Aorta (tissue), 5 donors: ENCODE measurements at regions of chr22 and their contacts with region 1.

Region 1: GRCh38 chr22:20885557-20886323 is 26.9 kb downstream of the SNAP29 start:
- DNase-seq: peak; percentile 89 to 93
- ATAC-seq: peak; percentile 94
- H3K4me3 ChIP-seq: no peak overlapping the region
- H3K27ac ChIP-seq: peak overlapping the region in 1 of 2 donors; percentile 13
- H3K4me1 ChIP-seq: no peaks in the 10 kb centered on the region
- H3K27me3 ChIP-seq: no peaks in the 10 kb centered on the region

Region 2: GRCh38 chr22:20916983-20917810 is 31.5 kb after region 1 on chr22 and contains the start of gene CRKL:
- intact Hi-C with region 1: loop called in 1 of 2 experiments (anchors 1 kb)
- DNase-seq: peak; percentile 98 to 99
- ATAC-seq: peak; percentile 100
- H3K4me3 ChIP-seq: peak within 1 kb of the TSS; percentile 50 to 87
- H3K27ac ChIP-seq: peak within 1 kb of the TSS; percentile 14 to 61
- H3K4me1 ChIP-seq: peaks cover 0 to 3% of the 10 kb centered on the region in 2 donors
- H3K27me3 ChIP-seq: no peaks in the 10 kb centered on the region
- total RNA-seq, gene CRKL: 36.2 to 45.9 TPM

Region 3: GRCh38 chr22:20946080-20946986 is 60.6 kb after region 1 on chr22:
- intact Hi-C with region 1: no loop called
- DNase-seq: peak in 1 of 2 donors; percentile 34
- ATAC-seq: no peak
- H3K4me3 ChIP-seq: no peak overlapping the region
- H3K27ac ChIP-seq: no peak overlapping the region
- H3K4me1 ChIP-seq: peaks cover 0 to 3% of the 10 kb centered on the region in 2 donors
- H3K27me3 ChIP-seq: no peaks in the 10 kb centered on the region

Region 4: DNA sequence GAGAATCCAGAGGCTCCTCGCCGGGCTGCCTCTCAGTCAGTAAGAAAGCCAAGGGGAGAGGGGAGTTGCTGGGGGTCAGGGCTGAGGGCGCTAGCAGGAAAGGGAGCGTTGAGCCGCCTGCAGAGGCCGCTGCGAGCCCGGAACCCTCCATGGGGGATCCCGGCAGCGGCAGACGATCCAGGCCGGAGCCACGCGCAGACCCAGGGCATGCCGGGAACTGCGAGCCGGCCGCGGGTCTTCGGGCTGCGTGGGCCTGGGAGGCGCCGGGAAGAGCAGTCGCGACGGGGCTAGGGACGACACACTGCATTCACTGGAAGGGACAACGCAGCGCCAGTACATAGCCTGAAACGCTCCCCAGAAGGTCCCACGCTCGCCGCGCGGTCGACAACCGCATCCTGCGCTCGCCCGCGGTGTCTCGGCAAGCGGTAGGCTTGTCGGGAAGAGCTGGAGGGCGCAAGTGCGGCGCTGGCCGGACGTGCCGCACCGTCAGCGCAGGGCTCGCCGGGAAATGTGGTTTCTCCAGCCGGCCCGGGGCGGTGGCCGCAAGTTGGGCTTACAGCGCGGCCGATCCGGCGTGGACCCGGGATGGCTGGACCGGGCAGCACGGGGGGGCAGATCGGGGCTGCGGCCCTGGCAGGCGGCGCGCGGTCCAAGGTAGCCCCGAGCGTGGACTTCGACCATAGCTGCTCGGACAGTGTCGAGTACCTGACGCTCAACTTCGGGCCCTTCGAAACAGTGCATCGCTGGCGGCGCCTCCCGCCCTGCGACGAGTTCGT is 96.2 kb after region 1 on chr22 and contains the start of gene LZTR1:
- intact Hi-C with region 1: loop called in 1 of 2 experiments (anchors 5 kb)
- DNase-seq: peak; percentile 91 to 95
- ATAC-seq: peak; percentile 95
- H3K4me3 ChIP-seq: peak within 1 kb of the TSS; percentile 68 to 83
- H3K27ac ChIP-seq: peak within 1 kb of the TSS; percentile 15 to 78
- H3K4me1 ChIP-seq: no peaks in the 10 kb centered on the region
- H3K27me3 ChIP-seq: no peaks in the 10 kb centered on the region
- total RNA-seq, gene LZTR1: 59.0 to 81.7 TPM